ENCODE measurements at regions of chr22 and their contacts with region 1.

Region 1: GRCh38 chr22:22818861-22819855 is 68.5 kb upstream of the IGLL5 start:
- DNase-seq: peak; percentile 50
- H3K4me3 Mint-ChIP-seq: no peak overlapping the region
- H3K27ac Mint-ChIP-seq: peak overlapping the region; percentile 67
- H3K4me1 Mint-ChIP-seq: peaks cover 87% of the 10 kb centered on the region
- H3K27me3 Mint-ChIP-seq: no peaks in the 10 kb centered on the region

Region 2: GRCh38 chr22:22865311-22866072 is 46.3 kb after region 1 on chr22:
- CTCF ChIA-PET with region 1: interaction called, 3 read pairs
- POLR2A ChIA-PET with region 1: no interaction called
- intact Hi-C with region 1: loop called (anchors 5 kb)
- DNase-seq: peak; percentile 66
- H3K4me3 Mint-ChIP-seq: no peak overlapping the region
- H3K27ac Mint-ChIP-seq: peak overlapping the region; percentile 69
- H3K4me1 Mint-ChIP-seq: peaks cover 36% of the 10 kb centered on the region
- H3K27me3 Mint-ChIP-seq: no peaks in the 10 kb centered on the region